ENCODE measurements at regions of chr14 and their contacts with region 1.

Region 1: GRCh38 chr14:58118097-58118815 is 33.8 kb downstream of the ARMH4 start:
- DNase-seq: no peak
- ATAC-seq: peak in 1 of 4 donors; percentile 19
- H3K4me3 ChIP-seq: no peak overlapping the region
- H3K27ac ChIP-seq: no peak overlapping the region
- H3K4me1 ChIP-seq: peaks cover 0 to 4% (median 0%) of the 10 kb centered on the region in 4 donors
- H3K27me3 ChIP-seq: no peaks in the 10 kb centered on the region
- CTCF ChIP-seq: no peak
- POLR2A ChIP-seq: no peak

Region 2: DNA sequence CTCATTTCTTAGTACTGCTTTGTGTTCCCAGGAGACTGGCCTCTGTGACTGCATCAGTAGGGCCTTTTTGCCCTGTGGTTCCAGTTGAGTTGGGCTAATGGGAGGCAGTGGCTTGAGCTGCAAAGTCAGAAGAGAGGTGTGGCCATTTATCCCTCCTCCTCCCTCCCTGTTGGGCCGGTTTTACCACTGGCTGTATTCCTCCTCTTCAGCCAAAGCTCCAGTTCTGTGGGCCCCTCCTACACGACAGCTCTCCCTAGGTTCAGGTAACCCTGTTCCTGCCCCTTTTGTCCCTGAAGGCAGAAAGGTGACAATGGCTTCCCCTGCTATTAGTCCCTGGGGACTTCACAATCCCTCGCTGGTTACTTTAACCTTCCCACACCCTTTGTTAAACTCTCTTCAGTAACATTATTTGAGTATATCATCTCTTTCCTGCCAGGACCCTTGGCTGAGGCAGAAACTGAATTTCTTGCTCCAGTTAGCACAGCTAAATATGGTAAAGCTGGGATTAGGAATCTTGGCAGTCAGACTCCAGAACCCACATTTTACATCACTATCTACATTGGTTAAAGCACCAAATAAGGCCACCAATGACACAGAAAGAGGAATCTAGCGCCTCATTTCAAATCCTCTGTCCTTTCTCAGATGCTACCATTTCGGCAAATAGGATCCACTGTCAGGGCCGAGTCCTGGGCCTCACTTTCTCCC is 130.5 kb before region 1 on chr14:
- intact Hi-C with region 1: no loop called
- DNase-seq: no peak
- ATAC-seq: no peak
- H3K4me3 ChIP-seq: no peak overlapping the region
- H3K27ac ChIP-seq: no peak overlapping the region
- H3K4me1 ChIP-seq: no peaks in the 10 kb centered on the region
- H3K27me3 ChIP-seq: no peaks in the 10 kb centered on the region
- CTCF ChIP-seq: no peak
- POLR2A ChIP-seq: no peak

Region 3: DNA sequence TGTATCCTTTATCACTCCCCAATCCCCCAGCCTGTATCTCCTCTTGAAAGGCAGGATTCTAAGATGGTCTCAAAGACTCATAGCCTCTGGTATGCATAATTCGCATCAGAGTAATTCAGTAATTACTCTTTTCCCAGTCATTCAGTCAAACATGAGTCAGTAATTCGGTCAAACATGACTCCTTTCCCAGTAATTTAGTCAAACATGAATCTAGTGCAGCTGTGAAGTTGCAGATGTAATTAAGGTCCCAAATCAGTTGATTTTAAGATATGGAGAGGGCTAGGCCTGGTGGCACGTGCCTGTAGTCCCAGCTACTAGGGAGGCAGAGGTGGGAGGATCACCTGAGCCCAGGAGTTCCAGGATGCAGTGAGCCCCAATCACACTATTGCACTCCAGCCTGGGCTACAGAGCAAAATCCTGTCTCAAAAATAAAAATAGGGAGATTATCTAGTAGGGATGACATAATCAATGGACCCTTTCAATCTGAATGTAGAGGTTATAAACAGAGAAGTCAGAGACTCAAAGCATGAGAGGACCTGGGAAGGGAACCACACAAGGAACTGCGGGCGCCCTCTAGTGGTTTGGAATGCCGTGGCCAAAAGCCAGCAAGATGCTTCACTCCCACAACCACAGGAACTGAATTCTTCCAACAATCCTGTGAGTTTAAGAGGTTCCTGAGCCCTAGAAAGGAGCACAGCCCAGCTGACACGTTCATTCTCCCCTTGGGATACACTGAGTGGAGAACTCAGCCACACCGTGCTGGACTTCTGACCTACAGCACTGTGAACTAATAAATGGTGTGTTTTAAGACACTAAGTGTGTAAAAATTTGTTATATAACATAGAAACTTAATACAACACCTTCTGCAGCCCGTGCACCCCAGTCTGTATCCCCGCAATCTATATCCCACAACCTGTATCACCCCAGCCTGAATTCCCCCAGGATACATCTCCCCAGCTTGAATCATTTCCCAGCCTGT is 48.0 kb after region 1 on chr14:
- intact Hi-C with region 1: loop called in 1 of 2 experiments (anchors 10 kb)
- DNase-seq: peak; percentile 78 to 81 (median 81)
- ATAC-seq: peak; percentile 84 to 89 (median 88)
- H3K4me3 ChIP-seq: no peak overlapping the region
- H3K27ac ChIP-seq: no peak overlapping the region
- H3K4me1 ChIP-seq: no peaks in the 10 kb centered on the region
- H3K27me3 ChIP-seq: no peaks in the 10 kb centered on the region
- CTCF ChIP-seq: peak; percentile 58 to 96 (median 90)
- POLR2A ChIP-seq: no peak

Region 4: GRCh38 chr14:58239244-58240195 is 121.3 kb after region 1 on chr14:
- intact Hi-C with region 1: no loop called
- DNase-seq: peak; percentile 66 to 82 (median 79)
- ATAC-seq: peak; percentile 53 to 70 (median 60)
- H3K4me3 ChIP-seq: peak overlapping the region; percentile 14 to 49 (median 44)
- H3K27ac ChIP-seq: peak overlapping the region; percentile 72 to 90 (median 82)
- H3K4me1 ChIP-seq: peaks cover 0 to 26% (median 8%) of the 10 kb centered on the region in 4 donors
- H3K27me3 ChIP-seq: no peaks in the 10 kb centered on the region
- CTCF ChIP-seq: no peak
- POLR2A ChIP-seq: peak; percentile 62